Natural killer cell (primary cell): ENCODE measurements at regions of chr13 and their contacts with region 1.

Region 1: GRCh38 chr13:41811588-41812021 is 149.3 kb downstream of the VWA8 start:
- DNase-seq: peak in 1 of 2 donors; percentile 56
- ATAC-seq: peak; percentile 87 to 94 (median 89)
- H3K4me3 ChIP-seq: no peak overlapping the region
- H3K4me3 Mint-ChIP-seq: peak overlapping the region; percentile 72
- H3K27ac ChIP-seq: peak overlapping the region; percentile 79
- H3K27ac Mint-ChIP-seq: peak overlapping the region; percentile 86 to 87
- H3K4me1 ChIP-seq: peaks cover 11% of the 10 kb centered on the region
- H3K4me1 Mint-ChIP-seq: peaks cover 36 to 39% of the 10 kb centered on the region in 2 donors
- H3K27me3 ChIP-seq: no peaks in the 10 kb centered on the region
- H3K27me3 Mint-ChIP-seq: no peaks in the 10 kb centered on the region
- CTCF ChIP-seq: no peak

Region 2: GRCh38 chr13:41456768-41457588 is 354.6 kb before region 1 on chr13 and contains the start of gene RGCC:
- intact Hi-C with region 1: loop called (anchors 10 kb)
- DNase-seq: peak; percentile 89 to 96
- ATAC-seq: peak; percentile 78 to 87 (median 83)
- H3K4me3 ChIP-seq: peak within 1 kb of the TSS; percentile 76
- H3K4me3 Mint-ChIP-seq: peak within 1 kb of the TSS; percentile 85
- H3K27ac ChIP-seq: peak within 1 kb of the TSS; percentile 43
- H3K27ac Mint-ChIP-seq: peak within 1 kb of the TSS; percentile 67 to 94
- H3K4me1 ChIP-seq: peaks cover 24% of the 10 kb centered on the region
- H3K4me1 Mint-ChIP-seq: peaks cover 29% of the 10 kb centered on the region in 2 donors
- H3K27me3 ChIP-seq: peaks cover 2% of the 10 kb centered on the region
- H3K27me3 Mint-ChIP-seq: peaks cover 0 to 6% of the 10 kb centered on the region in 2 donors
- CTCF ChIP-seq: no peak
- total RNA-seq, gene RGCC: 61.7 to 306 (median 85.4) TPM

Region 3: DNA sequence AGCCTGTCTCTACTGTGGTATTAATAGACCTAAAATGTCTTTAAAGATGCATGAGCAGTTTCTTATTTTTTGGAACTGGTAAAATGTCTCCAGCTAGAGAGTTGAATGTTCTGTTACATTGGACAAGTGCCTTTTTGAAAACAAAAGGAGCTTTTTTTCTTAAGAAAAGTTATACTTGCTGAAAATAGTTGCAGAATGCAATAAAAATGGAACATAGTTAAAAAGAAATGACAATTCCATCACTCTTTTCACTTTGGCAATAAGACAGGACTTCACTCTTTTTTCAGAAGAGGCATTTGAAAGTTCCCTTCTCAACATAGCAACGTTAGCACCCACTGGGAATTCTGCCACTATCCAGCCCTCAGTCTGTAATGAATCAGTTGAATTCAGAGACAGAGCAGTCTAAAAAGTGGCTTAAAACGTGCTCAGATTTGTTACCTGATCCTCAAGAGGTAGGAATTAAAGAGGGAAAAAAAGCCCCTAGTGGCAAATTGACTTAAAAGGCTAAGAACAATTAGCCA is 344.1 kb before region 1 on chr13:
- intact Hi-C with region 1: no loop called
- DNase-seq: no peak
- ATAC-seq: no peak
- H3K4me3 ChIP-seq: no peak overlapping the region
- H3K4me3 Mint-ChIP-seq: no peak overlapping the region
- H3K27ac ChIP-seq: no peak overlapping the region
- H3K27ac Mint-ChIP-seq: peak overlapping the region in 1 of 2 donors; percentile 85
- H3K4me1 ChIP-seq: peaks cover 38% of the 10 kb centered on the region
- H3K4me1 Mint-ChIP-seq: peaks cover 44 to 46% of the 10 kb centered on the region in 2 donors
- H3K27me3 ChIP-seq: no peaks in the 10 kb centered on the region
- H3K27me3 Mint-ChIP-seq: no peaks in the 10 kb centered on the region
- CTCF ChIP-seq: no peak

Region 4: DNA sequence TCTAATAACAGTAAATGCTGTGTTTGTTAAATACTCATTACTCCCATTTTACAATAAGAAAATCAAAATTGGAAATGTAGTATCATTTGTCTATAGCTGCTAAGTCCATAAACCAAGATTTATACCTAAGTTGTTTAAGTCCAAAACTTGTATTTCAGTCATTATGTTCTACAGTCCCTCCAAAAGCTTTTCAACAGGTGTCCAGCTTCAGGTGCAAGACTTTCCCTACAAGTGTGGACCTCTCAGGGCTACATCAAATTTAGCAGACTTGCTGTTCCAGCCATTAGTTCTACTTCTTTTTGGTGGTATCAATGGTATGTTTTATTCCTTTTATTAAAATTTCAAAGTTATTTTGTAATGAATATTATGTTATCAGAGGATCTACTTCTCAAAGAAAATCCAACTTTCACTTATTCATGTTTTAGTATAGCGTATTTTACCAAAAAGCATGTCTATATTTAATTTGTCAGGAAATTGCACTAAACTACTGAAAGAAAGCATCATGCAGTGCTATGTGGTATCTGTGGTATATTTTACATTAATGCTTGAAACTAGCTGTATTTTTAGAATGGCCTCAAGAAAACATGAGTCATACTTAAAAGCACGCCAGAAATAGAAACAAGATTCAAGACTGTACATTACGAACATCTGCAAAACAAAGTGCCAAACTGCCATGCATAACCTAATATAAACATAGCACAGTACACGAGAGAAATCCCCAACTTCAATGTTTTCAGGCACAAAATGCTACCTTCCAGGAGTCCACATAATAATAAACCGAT is 104.8 kb after region 1 on chr13:
- intact Hi-C with region 1: no loop called
- DNase-seq: peak in 1 of 2 donors; percentile 40
- ATAC-seq: peak; percentile 76 to 88 (median 85)
- H3K4me3 ChIP-seq: no peak overlapping the region
- H3K4me3 Mint-ChIP-seq: no peak overlapping the region
- H3K27ac ChIP-seq: no peak overlapping the region
- H3K27ac Mint-ChIP-seq: peak overlapping the region; percentile 21 to 79
- H3K4me1 ChIP-seq: peaks cover 2% of the 10 kb centered on the region
- H3K4me1 Mint-ChIP-seq: peaks cover 22 to 43% of the 10 kb centered on the region in 2 donors
- H3K27me3 ChIP-seq: no peaks in the 10 kb centered on the region
- H3K27me3 Mint-ChIP-seq: no peaks in the 10 kb centered on the region
- CTCF ChIP-seq: no peak